ENCODE measurements at regions of chr10 and their contacts with region 1.

Region 1: DNA sequence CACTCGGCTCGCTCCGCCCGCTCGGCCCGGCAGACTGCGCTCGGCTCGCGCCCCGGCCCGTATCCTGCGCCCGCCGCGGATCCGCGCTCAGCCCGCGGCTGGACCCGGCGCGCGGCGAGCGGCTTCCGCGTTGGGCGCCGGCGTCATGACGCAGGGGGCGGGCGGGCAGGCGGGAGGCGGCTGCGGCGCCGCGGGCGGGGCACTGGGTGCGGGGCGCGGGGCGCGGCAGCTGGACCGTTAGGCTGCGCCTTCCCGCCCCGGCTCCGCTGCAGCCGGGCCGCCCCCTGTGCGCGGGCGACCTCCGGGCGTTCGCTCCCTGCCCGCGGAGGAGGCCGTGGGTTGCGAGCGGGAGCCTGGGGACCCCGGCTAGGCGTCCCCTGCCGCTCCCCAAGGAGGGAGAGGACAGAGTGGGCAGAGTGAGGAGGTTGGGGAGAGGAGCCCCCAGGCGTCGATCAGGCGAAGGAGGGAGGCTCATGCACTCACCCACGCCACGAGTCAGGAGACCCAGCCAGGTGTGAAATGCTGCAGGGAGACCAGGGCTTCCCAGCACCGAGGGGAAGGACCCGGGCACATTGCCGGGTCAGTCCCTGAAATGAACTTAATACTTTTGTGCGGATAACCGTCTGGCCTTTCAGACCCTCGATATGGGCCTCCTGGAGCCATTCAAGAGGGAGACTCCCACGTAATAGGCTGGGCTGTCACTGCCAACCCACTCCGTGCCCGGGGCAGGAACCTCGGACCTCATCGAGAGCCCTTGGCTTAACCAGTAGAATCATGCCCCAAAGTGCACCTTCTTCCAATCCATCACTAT is at the start of gene PIP4K2A:
- DNase-seq: peak; percentile 84
- H3K4me3 ChIP-seq: peak within 1 kb of the TSS; percentile 61 to 99 (median 90)
- H3K27ac ChIP-seq: peak within 1 kb of the TSS; percentile 86 to 91 (median 88)
- H3K4me1 ChIP-seq: peaks cover 0 to 36% (median 18%) of the 10 kb centered on the region in 4 donors
- H3K27me3 ChIP-seq: no peaks in the 10 kb centered on the region
- CTCF ChIP-seq: no peak
- EP300 ChIP-seq: no peak
- POLR2A ChIP-seq: no peak
- total RNA-seq, gene PIP4K2A: 16.6 to 23.2 (median 20.4) TPM

Region 2: DNA sequence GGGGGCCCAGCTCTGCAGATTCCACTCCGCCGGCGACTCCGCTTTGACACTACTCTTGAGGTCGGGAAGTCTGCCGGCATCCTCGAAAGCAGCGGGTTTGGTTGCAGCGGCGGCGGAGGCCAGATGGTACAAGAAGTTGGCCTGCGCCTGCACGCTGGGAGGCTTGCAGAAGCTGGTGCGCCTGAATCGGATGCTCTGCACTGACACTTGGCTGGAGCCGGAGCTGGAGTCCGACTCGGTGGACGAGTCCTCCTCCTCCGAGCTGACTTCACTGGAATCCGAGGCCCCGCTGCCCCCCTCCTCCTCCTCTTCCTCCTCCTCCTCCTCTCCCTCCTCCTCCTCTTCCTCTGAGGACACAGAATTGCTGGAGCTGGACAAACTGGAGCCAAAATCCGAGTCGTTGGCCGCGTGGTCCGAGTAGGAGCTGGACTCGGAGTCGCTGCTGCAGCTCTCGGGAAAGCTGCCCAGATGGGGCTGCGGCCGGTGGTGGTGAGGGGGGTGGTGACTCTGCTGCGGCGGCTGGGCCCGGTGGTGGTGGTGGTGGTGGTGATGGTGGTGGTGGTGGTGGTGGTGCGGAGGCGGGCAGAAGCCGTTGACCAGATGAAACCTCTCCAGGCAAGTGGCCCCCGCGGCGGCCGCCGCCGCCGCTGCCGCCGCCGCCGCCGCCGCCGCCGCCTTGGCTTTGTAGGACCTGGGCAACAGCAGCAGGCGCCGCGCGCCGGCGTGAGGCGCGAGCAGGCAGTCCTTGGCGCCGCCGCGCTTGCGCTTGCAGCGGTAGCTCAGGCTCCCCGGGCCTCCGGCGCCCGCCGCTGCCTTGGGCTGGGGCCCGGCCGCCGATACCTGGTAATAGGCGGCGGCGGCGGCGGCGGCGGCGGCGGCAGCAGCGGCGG is 1198.2 kb before region 1 on chr10:
- intact Hi-C with region 1: loop called (anchors 10 kb)
- DNase-seq: peak; percentile 83
- H3K4me3 ChIP-seq: peak overlapping the region; percentile 45 to 68 (median 64)
- H3K27ac ChIP-seq: peak overlapping the region; percentile 86 to 99 (median 92)
- H3K4me1 ChIP-seq: peaks cover 0 to 73% (median 35%) of the 10 kb centered on the region in 4 donors
- H3K27me3 ChIP-seq: peaks cover 0 to 6% (median 0%) of the 10 kb centered on the region in 3 donors
- CTCF ChIP-seq: no peak
- EP300 ChIP-seq: no peak
- POLR2A ChIP-seq: no peak

Region 3: GRCh38 chr10:22340362-22341189 is 374.1 kb before region 1 on chr10:
- intact Hi-C with region 1: loop called (anchors 5 kb)
- DNase-seq: peak; percentile 82
- H3K4me3 ChIP-seq: peak overlapping the region; percentile 53 to 84 (median 72)
- H3K27ac ChIP-seq: peak overlapping the region; percentile 91 to 98 (median 96)
- H3K4me1 ChIP-seq: peaks cover 0 to 35% (median 30%) of the 10 kb centered on the region in 4 donors
- H3K27me3 ChIP-seq: peaks cover 75 to 89% (median 79%) of the 10 kb centered on the region in 3 donors
- CTCF ChIP-seq: no peak
- EP300 ChIP-seq: no peak
- POLR2A ChIP-seq: peak; percentile 34 to 37

Region 4: DNA sequence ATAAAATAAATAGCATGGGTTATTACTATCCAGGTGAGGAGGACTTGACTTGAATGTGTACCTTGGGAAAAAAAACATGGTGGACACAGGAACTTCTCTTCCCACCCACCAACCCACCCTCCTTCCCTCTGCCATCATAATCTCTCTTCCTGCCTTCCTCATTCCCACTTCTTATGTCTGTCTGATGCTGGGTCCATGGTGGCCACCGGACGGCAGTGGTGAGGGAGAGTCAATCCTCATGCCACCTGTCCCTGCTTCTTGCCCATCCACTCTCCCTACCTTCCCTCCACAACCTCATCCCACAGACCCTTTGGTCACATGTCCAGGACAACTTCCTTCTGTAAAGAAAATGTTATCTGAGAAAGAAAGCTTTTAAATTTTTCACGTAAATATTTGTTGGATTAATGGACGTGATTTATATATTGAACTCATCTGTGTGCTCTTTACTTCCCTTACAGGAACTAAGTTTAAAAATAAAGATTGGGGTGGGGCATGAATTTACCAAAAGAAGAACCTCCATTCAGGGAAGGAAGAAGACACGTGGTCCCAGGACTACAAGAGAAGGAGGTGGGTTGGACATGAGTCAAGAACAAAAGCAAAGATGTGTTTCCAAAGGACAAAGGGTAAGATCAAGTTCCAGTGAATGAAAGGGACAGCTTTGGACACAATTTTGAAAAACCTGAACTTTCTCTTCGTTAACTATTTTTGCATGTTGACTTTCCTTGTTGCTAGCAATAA is 104.8 kb before region 1 on chr10:
- intact Hi-C with region 1: no loop called
- DNase-seq: no peak
- H3K4me3 ChIP-seq: no peak overlapping the region
- H3K27ac ChIP-seq: no peak overlapping the region
- H3K4me1 ChIP-seq: peaks cover 0 to 2% (median under 1%) of the 10 kb centered on the region in 4 donors
- H3K27me3 ChIP-seq: no peaks in the 10 kb centered on the region
- CTCF ChIP-seq: no peak
- EP300 ChIP-seq: no peak
- POLR2A ChIP-seq: no peak

Region 5: GRCh38 chr10:22620140-22620857 is 94.4 kb before region 1 on chr10:
- intact Hi-C with region 1: loop called (anchors 5 kb)
- DNase-seq: peak; percentile 77
- H3K4me3 ChIP-seq: no peak overlapping the region
- H3K27ac ChIP-seq: peak overlapping the region in 2 of 4 donors; percentile 24 to 28
- H3K4me1 ChIP-seq: peaks cover 0 to 76% (median 43%) of the 10 kb centered on the region in 4 donors
- H3K27me3 ChIP-seq: no peaks in the 10 kb centered on the region
- CTCF ChIP-seq: no peak
- EP300 ChIP-seq: no peak
- POLR2A ChIP-seq: no peak

Region 6: GRCh38 chr10:22630234-22631174 is 84.2 kb before region 1 on chr10:
- intact Hi-C with region 1: no loop called
- DNase-seq: no peak
- H3K4me3 ChIP-seq: no peak overlapping the region
- H3K27ac ChIP-seq: peak overlapping the region in 2 of 4 donors; percentile 10 to 36
- H3K4me1 ChIP-seq: peaks cover 0 to 24% (median 16%) of the 10 kb centered on the region in 4 donors
- H3K27me3 ChIP-seq: no peaks in the 10 kb centered on the region
- CTCF ChIP-seq: no peak
- EP300 ChIP-seq: no peak
- POLR2A ChIP-seq: no peak

Region 7: DNA sequence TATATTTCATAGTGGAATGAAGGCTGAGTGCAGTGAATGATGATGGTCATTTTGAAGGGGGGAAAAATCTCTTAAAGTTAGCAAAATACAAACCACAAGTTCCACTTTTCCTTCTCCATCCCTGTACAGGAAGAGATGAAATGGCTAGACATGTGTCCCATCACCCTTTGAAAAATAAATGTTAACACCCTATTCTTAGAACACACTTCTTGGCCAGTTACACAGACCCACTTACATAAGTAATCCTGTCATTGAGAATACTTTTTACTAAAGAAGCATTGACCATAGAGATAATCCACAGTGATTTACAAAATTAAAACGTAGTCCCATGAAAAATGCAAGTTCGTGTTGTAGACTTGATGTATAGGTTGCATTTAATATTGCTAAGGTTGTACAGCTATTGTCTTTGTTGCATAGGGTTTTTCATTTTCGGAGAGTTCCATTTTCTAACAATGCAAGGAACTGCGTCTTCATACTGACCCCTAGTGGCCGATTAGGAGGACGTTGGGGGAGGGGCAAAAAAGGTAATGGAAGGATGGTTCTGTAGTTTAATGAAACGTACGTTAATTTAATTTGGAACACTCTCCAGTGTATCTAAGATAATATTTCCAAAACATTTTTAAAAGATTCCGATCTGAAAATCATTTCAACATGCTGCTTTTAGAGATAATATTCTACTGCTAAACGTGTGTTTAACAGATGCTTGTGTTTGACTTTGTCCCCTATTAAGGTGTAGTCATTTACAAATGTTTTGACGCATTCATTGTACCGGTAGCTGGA is 274.1 kb after region 1 on chr10:
- intact Hi-C with region 1: loop called (anchors 10 kb)
- DNase-seq: peak; percentile 73
- H3K4me3 ChIP-seq: no peak overlapping the region
- H3K27ac ChIP-seq: no peak overlapping the region
- H3K4me1 ChIP-seq: peaks cover 0 to 11% (median 4%) of the 10 kb centered on the region in 4 donors
- H3K27me3 ChIP-seq: no peaks in the 10 kb centered on the region
- CTCF ChIP-seq: peak; percentile 78 to 89 (median 85)
- EP300 ChIP-seq: no peak
- POLR2A ChIP-seq: no peak

Region 8: GRCh38 chr10:23095404-23095965 is 380.8 kb after region 1 on chr10 and contains the start of gene MSRB2:
- intact Hi-C with region 1: loop called (anchors 10 kb)
- DNase-seq: peak; percentile 98
- H3K4me3 ChIP-seq: peak within 1 kb of the TSS; percentile 62 to 95 (median 79)
- H3K27ac ChIP-seq: peak within 1 kb of the TSS; percentile 90 to 99 (median 96)
- H3K4me1 ChIP-seq: peaks cover 0 to 17% (median 12%) of the 10 kb centered on the region in 4 donors
- H3K27me3 ChIP-seq: no peaks in the 10 kb centered on the region
- CTCF ChIP-seq: no peak
- EP300 ChIP-seq: no peak
- POLR2A ChIP-seq: peak; percentile 45 to 55
- total RNA-seq, gene MSRB2: 32.7 to 56.3 (median 47.0) TPM

Measured in sigmoid colon (tissue), 7 donors.